ENCODE measurements at regions of chr9 and their contacts with region 1.

Region 1: GRCh38 chr9:76426807-76427419 is 32.1 kb upstream of the GCNT1 start:
- DNase-seq: no peak
- H3K4me3 ChIP-seq: no peak overlapping the region
- CTCF ChIP-seq: no peak
- POLR2A ChIP-seq: no peak

Region 2: DNA sequence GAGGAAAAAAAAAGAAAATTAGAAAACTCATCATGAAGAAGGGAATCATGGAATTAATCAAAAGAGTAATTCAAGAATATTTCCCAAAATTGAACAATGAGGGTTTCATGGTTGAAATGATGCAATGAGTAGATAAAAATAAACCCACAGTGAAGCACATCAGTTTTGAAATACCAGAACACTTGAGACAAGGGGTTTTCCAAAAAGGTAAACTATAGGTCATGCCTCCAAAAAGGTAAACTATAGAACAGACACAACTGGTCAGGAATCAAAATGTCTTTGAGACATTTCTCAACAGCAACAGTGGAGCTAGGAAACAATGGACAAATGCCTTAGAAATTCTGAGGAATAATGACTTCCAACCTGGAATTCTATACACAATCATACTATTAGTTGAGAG is 596.6 kb before region 1 on chr9:
- intact Hi-C with region 1: loop called (anchors 5 kb)
- DNase-seq: no peak
- H3K4me3 ChIP-seq: no peak overlapping the region
- CTCF ChIP-seq: no peak
- POLR2A ChIP-seq: no peak